Natural killer cell (primary cell): ENCODE measurements at regions of chrX and their contacts with region 1.

Region 1: GRCh38 chrX:123878252-123878721 is 18.4 kb downstream of the XIAP start:
- DNase-seq: peak in 1 of 2 donors; percentile 45
- ATAC-seq: peak; percentile 56 to 74 (median 67)
- H3K4me3 ChIP-seq: no peak overlapping the region
- H3K4me3 Mint-ChIP-seq: peak overlapping the region; percentile 80
- H3K27ac ChIP-seq: peak overlapping the region; percentile 80
- H3K27ac Mint-ChIP-seq: peak overlapping the region; percentile 86 to 88
- H3K4me1 ChIP-seq: peaks cover 22% of the 10 kb centered on the region
- H3K4me1 Mint-ChIP-seq: peaks cover 11 to 20% of the 10 kb centered on the region in 2 donors
- H3K27me3 ChIP-seq: no peaks in the 10 kb centered on the region
- H3K27me3 Mint-ChIP-seq: no peaks in the 10 kb centered on the region
- CTCF ChIP-seq: no peak

Region 2: DNA sequence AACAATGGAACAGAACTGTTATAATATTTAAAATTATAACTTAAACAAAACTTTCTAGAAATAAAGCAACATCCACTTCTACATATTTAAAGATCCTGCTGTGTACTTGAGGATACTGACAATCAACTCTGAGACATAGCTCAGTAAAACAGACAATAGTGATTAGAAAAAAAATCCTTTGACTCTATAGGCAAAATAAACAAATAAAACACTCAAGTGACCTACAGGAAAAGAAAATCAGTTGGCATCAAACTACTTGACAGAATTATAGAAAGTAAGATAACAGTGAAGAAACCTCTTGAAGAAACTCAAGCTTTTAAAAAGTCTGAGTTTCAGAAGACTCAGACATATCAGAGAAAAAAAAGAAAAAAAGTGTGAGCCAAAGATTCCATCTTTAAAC is 89.5 kb before region 1 on chrX:
- intact Hi-C with region 1: no loop called
- DNase-seq: no peak
- ATAC-seq: no peak
- H3K4me3 ChIP-seq: no peak overlapping the region
- H3K4me3 Mint-ChIP-seq: no peak overlapping the region
- H3K27ac ChIP-seq: no peak overlapping the region
- H3K27ac Mint-ChIP-seq: no peak overlapping the region
- H3K4me1 ChIP-seq: peaks cover 3% of the 10 kb centered on the region
- H3K4me1 Mint-ChIP-seq: peaks cover 0 to 4% of the 10 kb centered on the region in 2 donors
- H3K27me3 ChIP-seq: no peaks in the 10 kb centered on the region
- H3K27me3 Mint-ChIP-seq: no peaks in the 10 kb centered on the region
- CTCF ChIP-seq: no peak

Region 3: GRCh38 chrX:123822965-123823364 is 55.3 kb before region 1 on chrX:
- intact Hi-C with region 1: no loop called
- DNase-seq: no peak
- ATAC-seq: no peak
- H3K4me3 ChIP-seq: no peak overlapping the region
- H3K4me3 Mint-ChIP-seq: no peak overlapping the region
- H3K27ac ChIP-seq: no peak overlapping the region
- H3K27ac Mint-ChIP-seq: no peak overlapping the region
- H3K4me1 ChIP-seq: no peaks in the 10 kb centered on the region
- H3K4me1 Mint-ChIP-seq: no peaks in the 10 kb centered on the region
- H3K27me3 ChIP-seq: no peaks in the 10 kb centered on the region
- H3K27me3 Mint-ChIP-seq: no peaks in the 10 kb centered on the region
- CTCF ChIP-seq: no peak

Region 4: GRCh38 chrX:123859846-123860838 is 18.1 kb before region 1 on chrX and contains the start of gene XIAP:
- intact Hi-C with region 1: loop called (anchors 2 kb)
- DNase-seq: peak; percentile 72 to 76
- ATAC-seq: peak; percentile 83 to 95 (median 89)
- H3K4me3 ChIP-seq: peak within 1 kb of the TSS; percentile 98
- H3K4me3 Mint-ChIP-seq: peak within 1 kb of the TSS; percentile 93
- H3K27ac ChIP-seq: peak within 1 kb of the TSS; percentile 99
- H3K27ac Mint-ChIP-seq: peak within 1 kb of the TSS; percentile 95
- H3K4me1 ChIP-seq: peaks cover 13% of the 10 kb centered on the region
- H3K4me1 Mint-ChIP-seq: peaks cover 23 to 25% of the 10 kb centered on the region in 2 donors
- H3K27me3 ChIP-seq: no peaks in the 10 kb centered on the region
- H3K27me3 Mint-ChIP-seq: no peaks in the 10 kb centered on the region
- CTCF ChIP-seq: no peak
- total RNA-seq, gene XIAP: 32.2 to 44.9 (median 40.2) TPM

Region 5: DNA sequence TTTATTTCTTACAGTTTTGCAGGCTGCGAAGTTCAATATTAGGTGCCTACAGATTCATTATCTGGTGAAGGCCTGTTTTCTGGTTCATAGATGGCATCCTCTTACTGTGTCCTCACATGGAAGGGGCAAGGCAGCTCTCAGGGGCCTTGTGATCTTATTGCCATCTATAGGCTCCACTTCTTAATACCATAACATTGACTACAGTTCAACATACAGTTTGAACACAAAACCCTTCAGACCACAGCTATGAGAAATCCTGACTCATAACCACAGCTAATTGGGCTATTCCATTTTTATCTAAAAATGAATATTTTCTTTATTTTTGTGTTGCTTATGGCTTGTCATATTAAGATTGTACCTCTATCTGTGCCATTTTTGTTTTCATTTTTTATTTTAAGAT is 155.5 kb after region 1 on chrX:
- intact Hi-C with region 1: no loop called
- DNase-seq: no peak
- ATAC-seq: peak in 1 of 3 donors; percentile 54
- H3K4me3 ChIP-seq: no peak overlapping the region
- H3K4me3 Mint-ChIP-seq: no peak overlapping the region
- H3K27ac ChIP-seq: no peak overlapping the region
- H3K27ac Mint-ChIP-seq: peak overlapping the region in 1 of 2 donors; percentile 60
- H3K4me1 ChIP-seq: no peaks in the 10 kb centered on the region
- H3K4me1 Mint-ChIP-seq: peaks cover 0 to 10% of the 10 kb centered on the region in 2 donors
- H3K27me3 ChIP-seq: no peaks in the 10 kb centered on the region
- H3K27me3 Mint-ChIP-seq: no peaks in the 10 kb centered on the region
- CTCF ChIP-seq: no peak